ENCODE measurements at regions of chr4 and their contacts with region 1.

Region 1: DNA sequence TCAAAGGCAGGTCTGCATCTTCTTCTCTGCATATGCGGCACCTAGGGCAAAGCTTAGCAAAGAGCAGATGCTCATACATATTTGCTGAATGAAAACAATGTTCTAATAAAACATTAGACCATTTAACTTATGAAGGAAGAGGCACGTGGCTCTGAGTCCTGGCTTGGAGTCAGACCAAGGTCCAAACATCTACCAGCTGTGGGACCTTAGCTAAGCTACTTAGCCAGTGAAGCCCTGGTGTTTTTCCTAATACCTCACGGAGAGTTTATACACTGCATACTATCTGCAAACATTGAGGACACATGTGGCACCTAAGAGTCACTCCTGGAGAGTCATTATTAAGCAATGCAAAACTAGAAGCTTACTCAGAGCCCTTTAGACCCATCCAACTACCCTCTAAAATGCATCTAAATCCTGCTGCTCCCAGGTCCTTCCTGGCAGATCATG is 9.0 kb downstream of the PDGFC start:
- DNase-seq: peak; percentile 99
- ATAC-seq: peak; percentile 87
- H3K4me3 ChIP-seq: no peak overlapping the region
- H3K27ac ChIP-seq: peak overlapping the region; percentile 92; the same call in 1 of the 2 replicates
- H3K4me1 ChIP-seq: peaks cover 19% of the 10 kb centered on the region
- H3K27me3 ChIP-seq: no peaks in the 10 kb centered on the region
- CTCF ChIP-seq: no peak
- POLR2A ChIP-seq: no peak
- RAD21 ChIP-seq: no peak

Region 2: DNA sequence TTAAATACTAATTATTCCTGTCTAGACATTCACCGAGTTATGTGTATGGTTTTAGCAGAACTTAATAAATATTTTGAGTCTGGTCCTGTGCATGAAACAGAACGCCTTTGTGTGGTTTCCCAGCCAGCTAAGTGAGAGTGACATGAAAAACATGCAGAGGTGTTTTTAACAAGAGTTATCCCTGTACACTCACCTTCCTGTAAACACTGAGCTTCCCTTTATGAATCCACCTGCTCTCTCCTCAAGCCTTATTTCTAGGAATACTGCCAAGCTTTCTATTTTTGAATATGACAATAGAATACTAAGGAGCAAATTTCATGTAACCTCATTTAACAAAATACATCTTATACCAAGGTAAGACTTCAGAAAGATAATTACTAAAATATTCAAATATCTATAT is 738.6 kb before region 1 on chr4:
- CTCF ChIA-PET with region 1: no interaction called
- POLR2A ChIA-PET with region 1: no interaction called
- dilution Hi-C with region 1: no loop called
- in situ Hi-C with region 1: no loop called
- intact Hi-C with region 1: no loop called
- DNase-seq: no peak
- ATAC-seq: no peak
- H3K4me3 ChIP-seq: no peak overlapping the region
- H3K27ac ChIP-seq: no peak overlapping the region
- H3K4me1 ChIP-seq: no peaks in the 10 kb centered on the region
- H3K27me3 ChIP-seq: peaks cover 2% of the 10 kb centered on the region; the same call in 1 of the 2 replicates
- CTCF ChIP-seq: no peak
- POLR2A ChIP-seq: no peak
- RAD21 ChIP-seq: no peak

Region 3: GRCh38 chr4:156771171-156771837 is 191.2 kb before region 1 on chr4:
- CTCF ChIA-PET with region 1: no interaction called
- POLR2A ChIA-PET with region 1: interaction called, 11 read pairs
- dilution Hi-C with region 1: no loop called
- in situ Hi-C with region 1: loop called (anchors 10 kb)
- intact Hi-C with region 1: no loop called
- DNase-seq: peak; percentile 69
- ATAC-seq: peak; percentile 69
- H3K4me3 ChIP-seq: no peak overlapping the region
- H3K27ac ChIP-seq: peak overlapping the region; percentile 91
- H3K4me1 ChIP-seq: peaks cover 10% of the 10 kb centered on the region
- H3K27me3 ChIP-seq: no peaks in the 10 kb centered on the region
- CTCF ChIP-seq: no peak
- POLR2A ChIP-seq: no peak
- RAD21 ChIP-seq: no peak

Region 4: DNA sequence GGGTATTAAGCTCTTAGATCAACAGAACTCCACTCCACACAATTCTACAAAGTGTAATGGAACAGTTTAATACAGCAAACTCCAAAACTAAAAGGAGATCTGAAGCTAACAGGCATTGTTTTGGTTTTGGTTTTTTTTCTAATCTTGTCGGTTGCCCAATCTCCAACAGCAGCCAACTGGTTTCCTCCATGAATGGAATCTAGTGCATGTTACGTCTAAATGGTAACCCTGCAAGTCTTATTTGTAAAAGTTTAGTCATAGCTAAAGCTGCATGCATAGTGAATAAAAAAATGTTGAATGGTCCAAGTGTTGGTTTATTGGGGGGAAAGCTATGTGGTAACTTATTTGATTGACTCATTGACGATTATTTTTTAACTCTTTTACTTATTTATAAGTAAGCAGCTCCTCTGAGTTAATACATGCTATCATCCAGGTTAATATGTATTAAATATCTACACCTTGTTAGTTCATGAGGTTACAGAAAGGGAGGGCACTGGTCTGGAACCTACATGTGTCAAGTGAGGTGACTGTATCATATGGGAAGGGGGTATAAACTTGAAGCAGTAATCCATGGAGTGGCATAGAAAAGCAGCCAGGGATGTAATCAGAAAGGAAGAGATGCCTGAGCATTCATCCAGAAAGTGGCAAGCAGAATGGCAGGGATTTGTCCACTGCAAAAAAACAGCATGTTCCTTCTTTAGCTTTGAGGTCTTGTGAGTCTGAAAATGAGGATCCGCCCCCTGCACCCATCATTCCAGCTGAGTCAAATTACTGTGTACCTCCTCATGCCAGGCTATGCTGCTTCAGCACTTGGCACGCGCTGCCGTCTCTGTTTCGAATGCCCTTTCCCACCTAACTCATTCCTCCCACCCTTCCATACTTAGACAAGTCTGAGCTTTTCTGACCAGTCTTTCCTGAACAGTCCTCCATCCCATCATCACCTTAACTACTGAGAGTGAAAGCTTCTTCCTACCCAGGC is 72.6 kb before region 1 on chr4:
- CTCF ChIA-PET with region 1: no interaction called
- POLR2A ChIA-PET with region 1: no interaction called
- dilution Hi-C with region 1: no loop called
- in situ Hi-C with region 1: no loop called
- intact Hi-C with region 1: loop called (anchors 5 kb)
- DNase-seq: peak; percentile 83
- ATAC-seq: peak; percentile 90
- H3K4me3 ChIP-seq: no peak overlapping the region
- H3K27ac ChIP-seq: no peak overlapping the region
- H3K4me1 ChIP-seq: peaks cover 6% of the 10 kb centered on the region; the same call in 1 of the 2 replicates
- H3K27me3 ChIP-seq: no peaks in the 10 kb centered on the region
- CTCF ChIP-seq: no peak
- POLR2A ChIP-seq: no peak
- RAD21 ChIP-seq: no peak

Region 5: GRCh38 chr4:156909010-156909409 is 53.5 kb before region 1 on chr4:
- CTCF ChIA-PET with region 1: no interaction called
- POLR2A ChIA-PET with region 1: no interaction called
- dilution Hi-C with region 1: no loop called
- in situ Hi-C with region 1: no loop called
- intact Hi-C with region 1: no loop called
- DNase-seq: no peak
- ATAC-seq: no peak
- H3K4me3 ChIP-seq: no peak overlapping the region
- H3K27ac ChIP-seq: no peak overlapping the region
- H3K4me1 ChIP-seq: no peaks in the 10 kb centered on the region; the same call in 1 of the 2 replicates
- H3K27me3 ChIP-seq: no peaks in the 10 kb centered on the region
- CTCF ChIP-seq: no peak
- POLR2A ChIP-seq: no peak
- RAD21 ChIP-seq: no peak

Region 6: GRCh38 chr4:156933633-156934258 is 28.8 kb before region 1 on chr4:
- CTCF ChIA-PET with region 1: no interaction called
- POLR2A ChIA-PET with region 1: no interaction called
- dilution Hi-C with region 1: no loop called
- in situ Hi-C with region 1: no loop called
- intact Hi-C with region 1: loop called (anchors 1 kb)
- DNase-seq: peak; percentile 95
- ATAC-seq: peak; percentile 80
- H3K4me3 ChIP-seq: no peak overlapping the region
- H3K27ac ChIP-seq: peak overlapping the region; percentile 12
- H3K4me1 ChIP-seq: peaks cover 13% of the 10 kb centered on the region
- H3K27me3 ChIP-seq: no peaks in the 10 kb centered on the region
- CTCF ChIP-seq: no peak
- POLR2A ChIP-seq: no peak
- RAD21 ChIP-seq: no peak

Region 7: DNA sequence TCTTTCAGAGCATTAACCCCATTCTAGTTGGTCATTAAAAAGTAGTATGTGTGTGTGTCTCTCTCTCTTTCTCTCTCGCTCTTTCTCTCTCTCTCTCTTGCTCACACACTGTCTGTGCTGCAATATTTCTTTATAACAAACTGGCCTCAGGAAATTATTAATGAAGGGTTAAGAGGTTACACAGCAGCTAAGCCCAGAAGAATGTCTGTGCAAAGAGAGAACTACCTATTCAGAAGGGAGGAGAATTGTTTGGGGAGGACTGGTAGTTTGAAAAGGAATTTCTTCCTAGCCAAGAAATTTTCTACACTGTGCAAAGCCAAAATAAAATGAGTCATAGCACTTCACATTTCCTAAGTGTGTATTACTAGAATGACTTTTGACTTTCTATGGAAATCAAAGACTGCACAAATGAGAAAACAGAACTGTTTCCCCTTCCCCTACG is 13.2 kb before region 1 on chr4:
- CTCF ChIA-PET with region 1: no interaction called
- POLR2A ChIA-PET with region 1: interaction called, 3 read pairs
- dilution Hi-C with region 1: no loop called
- in situ Hi-C with region 1: no loop called
- intact Hi-C with region 1: loop called (anchors 2 kb)
- DNase-seq: peak; percentile 80
- ATAC-seq: peak; percentile 38
- H3K4me3 ChIP-seq: no peak overlapping the region
- H3K27ac ChIP-seq: no peak overlapping the region
- H3K4me1 ChIP-seq: peaks cover 18% of the 10 kb centered on the region
- H3K27me3 ChIP-seq: no peaks in the 10 kb centered on the region
- CTCF ChIP-seq: no peak
- POLR2A ChIP-seq: no peak
- RAD21 ChIP-seq: no peak